ENCODE measurements at regions of chr10 and their contacts with region 1.

Region 1: DNA sequence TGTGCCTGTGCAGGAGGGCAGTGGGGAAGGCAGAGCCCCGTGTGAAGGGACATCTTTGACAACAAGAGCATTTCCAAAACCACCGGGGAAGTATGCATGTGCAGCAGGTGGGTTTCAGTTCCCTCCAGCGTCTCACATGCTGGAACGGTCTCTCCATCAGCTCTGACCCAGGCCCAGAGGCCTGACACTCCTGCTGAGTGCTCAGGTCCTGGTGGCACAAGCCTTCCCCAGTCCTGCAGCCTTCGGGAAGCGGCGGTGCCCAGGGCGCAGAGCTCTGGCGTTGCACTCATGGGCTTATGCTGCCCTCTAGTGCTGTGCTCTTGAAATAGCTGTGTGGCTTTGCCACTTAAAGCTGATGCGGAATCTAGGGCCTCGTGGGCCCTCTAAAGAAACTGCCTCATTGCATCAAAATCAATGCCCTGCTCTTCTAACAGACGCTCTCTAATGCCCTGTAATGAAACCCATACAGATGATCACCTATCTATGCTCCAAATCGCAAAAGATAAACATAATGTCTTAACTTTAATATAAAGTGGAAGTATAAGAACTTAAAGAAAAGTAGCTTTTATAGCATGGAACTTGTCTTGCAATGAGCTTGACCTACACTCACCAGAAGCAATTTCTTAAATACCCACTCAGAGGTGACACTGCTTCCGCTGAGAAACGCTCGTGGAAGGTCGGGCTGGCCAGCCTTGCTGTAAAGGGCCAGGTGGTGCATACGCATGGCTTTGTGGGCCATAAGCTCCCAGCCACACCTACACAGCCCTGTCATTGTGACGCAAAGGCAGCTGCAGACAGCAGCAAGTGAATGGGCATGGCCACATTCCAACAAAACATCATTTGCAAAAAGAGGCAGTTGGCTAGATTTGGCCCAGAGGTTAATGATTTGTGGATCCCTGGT is 38.6 kb downstream of the CLRN3 start:
- DNase-seq: peak; percentile 46
- ATAC-seq: peak; percentile 76
- H3K4me3 Mint-ChIP-seq: peak overlapping the region; percentile 60
- H3K27ac Mint-ChIP-seq: peak overlapping the region; percentile 74
- H3K4me1 Mint-ChIP-seq: peaks cover 31% of the 10 kb centered on the region
- H3K27me3 Mint-ChIP-seq: no peaks in the 10 kb centered on the region
- CTCF ChIP-seq: peak; percentile 59

Region 2: GRCh38 chr10:127563718-127564553 is 290.2 kb before region 1 on chr10:
- CTCF ChIA-PET with region 1: interaction called, 11 read pairs
- POLR2A ChIA-PET with region 1: no interaction called
- intact Hi-C with region 1: loop called (anchors 2 kb)
- DNase-seq: no peak
- ATAC-seq: no peak
- H3K4me3 Mint-ChIP-seq: no peak overlapping the region
- H3K27ac Mint-ChIP-seq: no peak overlapping the region
- H3K4me1 Mint-ChIP-seq: no peaks in the 10 kb centered on the region
- H3K27me3 Mint-ChIP-seq: peaks cover 4% of the 10 kb centered on the region
- CTCF ChIP-seq: no peak

Region 3: GRCh38 chr10:127619546-127620325 is 234.4 kb before region 1 on chr10:
- CTCF ChIA-PET with region 1: no interaction called
- POLR2A ChIA-PET with region 1: no interaction called
- intact Hi-C with region 1: no loop called
- DNase-seq: no peak
- ATAC-seq: no peak
- H3K4me3 Mint-ChIP-seq: no peak overlapping the region
- H3K27ac Mint-ChIP-seq: no peak overlapping the region
- H3K4me1 Mint-ChIP-seq: no peaks in the 10 kb centered on the region
- H3K27me3 Mint-ChIP-seq: no peaks in the 10 kb centered on the region
- CTCF ChIP-seq: no peak

Region 4: GRCh38 chr10:127755753-127756152 is 98.4 kb before region 1 on chr10:
- CTCF ChIA-PET with region 1: interaction called, 10 read pairs
- POLR2A ChIA-PET with region 1: no interaction called
- intact Hi-C with region 1: no loop called
- DNase-seq: no peak
- ATAC-seq: no peak
- H3K4me3 Mint-ChIP-seq: no peak overlapping the region
- H3K27ac Mint-ChIP-seq: no peak overlapping the region
- H3K4me1 Mint-ChIP-seq: no peaks in the 10 kb centered on the region
- H3K27me3 Mint-ChIP-seq: peaks cover 8% of the 10 kb centered on the region
- CTCF ChIP-seq: no peak

Region 5: DNA sequence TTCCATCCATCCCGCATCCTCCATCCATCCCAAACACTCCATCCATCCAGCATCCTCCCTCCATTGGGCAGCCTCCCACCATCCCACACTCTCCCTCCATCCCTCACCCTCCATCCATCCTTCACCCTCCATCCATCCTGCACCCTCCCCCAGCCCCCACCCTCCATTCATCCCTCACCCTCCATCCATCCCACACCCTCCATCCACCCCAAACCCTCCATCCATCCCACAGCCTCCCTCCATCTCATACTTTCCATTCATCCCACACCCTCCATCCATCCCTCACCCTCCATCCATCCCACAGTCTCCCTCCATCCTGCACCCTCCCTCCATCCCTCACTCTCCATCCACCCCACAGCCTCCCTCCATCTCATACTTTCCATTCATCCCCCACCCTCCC is 56.8 kb before region 1 on chr10:
- CTCF ChIA-PET with region 1: no interaction called
- POLR2A ChIA-PET with region 1: no interaction called
- intact Hi-C with region 1: no loop called
- DNase-seq: no peak
- ATAC-seq: no peak
- H3K4me3 Mint-ChIP-seq: no peak overlapping the region
- H3K27ac Mint-ChIP-seq: no peak overlapping the region
- H3K4me1 Mint-ChIP-seq: no peaks in the 10 kb centered on the region
- H3K27me3 Mint-ChIP-seq: peaks cover 14% of the 10 kb centered on the region
- CTCF ChIP-seq: no peak

Region 6: GRCh38 chr10:128064108-128064969 is 210.2 kb after region 1 on chr10:
- CTCF ChIA-PET with region 1: interaction called, 8 read pairs
- POLR2A ChIA-PET with region 1: interaction called, 22 read pairs
- intact Hi-C with region 1: loop called (anchors 1 kb)
- DNase-seq: peak; percentile 68
- ATAC-seq: peak; percentile 76
- H3K4me3 Mint-ChIP-seq: peak overlapping the region; percentile 57
- H3K27ac Mint-ChIP-seq: peak overlapping the region; percentile 86
- H3K4me1 Mint-ChIP-seq: peaks cover 71% of the 10 kb centered on the region
- H3K27me3 Mint-ChIP-seq: no peaks in the 10 kb centered on the region
- CTCF ChIP-seq: no peak

Region 7: GRCh38 chr10:128150045-128150493 is 296.0 kb after region 1 on chr10:
- CTCF ChIA-PET with region 1: no interaction called
- POLR2A ChIA-PET with region 1: no interaction called
- intact Hi-C with region 1: loop called (anchors 1 kb)
- DNase-seq: peak; percentile 72
- ATAC-seq: peak; percentile 80
- H3K4me3 Mint-ChIP-seq: peak overlapping the region; percentile 59
- H3K27ac Mint-ChIP-seq: no peak overlapping the region
- H3K4me1 Mint-ChIP-seq: peaks cover 30% of the 10 kb centered on the region
- H3K27me3 Mint-ChIP-seq: peaks cover 11% of the 10 kb centered on the region
- CTCF ChIP-seq: no peak

Measured in activated B cell treated with CpG ODN at 0.5 μM for 24 hours (primary cell).